Right lobe of liver (tissue), 6 donors: ENCODE measurements at regions of chr1 and their contacts with region 1.

Region 1: GRCh38 chr1:110209715-110210603 is at the start of gene KCNC4:
- DNase-seq: peak; percentile 77 to 88 (median 87)
- ATAC-seq: peak; percentile 76 to 81 (median 79)
- H3K4me3 ChIP-seq: peak within 1 kb of the TSS; percentile 49 to 69 (median 58)
- H3K27ac ChIP-seq: peak within 1 kb of the TSS; percentile 47 to 63 (median 49)
- H3K4me1 ChIP-seq: peaks cover 0 to 21% (median 0%) of the 10 kb centered on the region in 4 donors
- H3K27me3 ChIP-seq: peaks cover 0 to 5% of the 10 kb centered on the region in 2 donors
- CTCF ChIP-seq: no peak
- POLR2A ChIP-seq: no peak
- total RNA-seq, gene KCNC4: 0.37 to 4.4 (median 1.7) TPM

Region 2: GRCh38 chr1:110312188-110313121 is 102.5 kb after region 1 on chr1:
- intact Hi-C with region 1: loop called (anchors 2 kb)
- DNase-seq: peak; percentile 81 to 84 (median 84)
- ATAC-seq: peak; percentile 98 to 100 (median 99)
- H3K4me3 ChIP-seq: no peak overlapping the region
- H3K27ac ChIP-seq: no peak overlapping the region
- H3K4me1 ChIP-seq: peaks cover 0 to 6% (median 0%) of the 10 kb centered on the region in 4 donors
- H3K27me3 ChIP-seq: no peaks in the 10 kb centered on the region
- CTCF ChIP-seq: peak; percentile 94 to 97 (median 95)
- POLR2A ChIP-seq: no peak